ENCODE measurements at regions of chr19 and their contacts with region 1.

Region 1: GRCh38 chr19:49546825-49547565 is 19.2 kb downstream of the RCN3 start:
- DNase-seq: peak; percentile 68
- H3K4me3 Mint-ChIP-seq: peak overlapping the region; percentile 35
- H3K27ac Mint-ChIP-seq: peak overlapping the region; percentile 36
- H3K4me1 Mint-ChIP-seq: peaks cover 37% of the 10 kb centered on the region
- H3K27me3 Mint-ChIP-seq: no peaks in the 10 kb centered on the region

Region 2: GRCh38 chr19:49391581-49392399 is 155.2 kb before region 1 on chr19:
- intact Hi-C with region 1: loop called (anchors 2 kb)
- DNase-seq: peak; percentile 71
- H3K4me3 Mint-ChIP-seq: no peak overlapping the region
- H3K27ac Mint-ChIP-seq: peak overlapping the region; percentile 5
- H3K4me1 Mint-ChIP-seq: peaks cover 12% of the 10 kb centered on the region
- H3K27me3 Mint-ChIP-seq: peaks cover 3% of the 10 kb centered on the region

Region 3: DNA sequence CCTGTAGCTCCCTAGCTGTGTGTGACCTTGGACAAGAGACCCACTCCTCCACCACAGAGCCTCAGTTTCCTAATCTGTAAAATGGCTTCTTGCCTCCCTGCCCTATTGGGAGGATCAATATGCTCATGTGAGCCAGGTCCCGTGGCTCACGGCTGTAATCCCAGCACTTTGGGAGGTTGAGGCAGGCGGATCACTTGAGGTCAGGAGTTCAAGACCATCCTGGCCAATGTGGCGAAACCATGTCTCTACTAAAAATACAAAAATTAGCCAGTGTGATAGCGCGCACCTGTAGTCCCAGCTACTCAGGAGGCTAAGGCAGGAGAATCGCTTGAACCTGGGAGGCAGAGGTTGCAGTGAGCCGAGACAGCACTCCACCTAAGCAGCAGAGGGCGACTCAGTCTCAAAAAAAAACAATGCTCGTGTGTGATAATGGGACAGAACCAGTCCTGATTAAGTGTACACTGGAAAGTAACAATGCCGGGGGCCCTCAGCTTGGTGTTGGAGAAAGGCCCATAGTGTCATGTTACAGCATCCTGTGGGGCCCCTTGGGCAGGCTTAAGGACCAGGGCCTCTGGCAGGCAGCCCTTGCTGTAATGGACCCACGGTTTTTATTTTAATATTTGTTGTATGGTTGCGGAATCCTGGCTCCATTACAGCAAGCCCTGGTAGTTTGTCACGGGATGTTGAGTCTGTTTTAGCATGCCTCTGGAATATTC is 44.0 kb before region 1 on chr19:
- intact Hi-C with region 1: loop called (anchors 1 kb)
- DNase-seq: peak; percentile 56
- H3K4me3 Mint-ChIP-seq: no peak overlapping the region
- H3K27ac Mint-ChIP-seq: no peak overlapping the region
- H3K4me1 Mint-ChIP-seq: peaks cover 54% of the 10 kb centered on the region
- H3K27me3 Mint-ChIP-seq: no peaks in the 10 kb centered on the region

Region 4: GRCh38 chr19:49580264-49581006 is 33.4 kb after region 1 on chr19 and contains the start of gene NOSIP:
- intact Hi-C with region 1: loop called (anchors 5 kb)
- DNase-seq: peak; percentile 94
- H3K4me3 Mint-ChIP-seq: peak within 1 kb of the TSS; percentile 93
- H3K27ac Mint-ChIP-seq: peak within 1 kb of the TSS; percentile 86
- H3K4me1 Mint-ChIP-seq: peaks cover 30% of the 10 kb centered on the region
- H3K27me3 Mint-ChIP-seq: no peaks in the 10 kb centered on the region
- total RNA-seq, gene NOSIP: 72.1 and 77.5 TPM in 2 replicates

Measured in activated T-helper 1 cell treated with anti-CD3 and anti-CD28 coated beads, Interleukin-12 subunit alpha, Interleukin-12 subunit beta, Interleukin-2, Interleukin-4 antibody, amounts not matched to agents 30 ng/mL and 10 ng/mL and 1 ng/mL, durations not matched to agents 14 hours and 24 hours and 36 hours (primary cell).